ENCODE measurements at regions of chr1 and their contacts with region 1.

Region 1: DNA sequence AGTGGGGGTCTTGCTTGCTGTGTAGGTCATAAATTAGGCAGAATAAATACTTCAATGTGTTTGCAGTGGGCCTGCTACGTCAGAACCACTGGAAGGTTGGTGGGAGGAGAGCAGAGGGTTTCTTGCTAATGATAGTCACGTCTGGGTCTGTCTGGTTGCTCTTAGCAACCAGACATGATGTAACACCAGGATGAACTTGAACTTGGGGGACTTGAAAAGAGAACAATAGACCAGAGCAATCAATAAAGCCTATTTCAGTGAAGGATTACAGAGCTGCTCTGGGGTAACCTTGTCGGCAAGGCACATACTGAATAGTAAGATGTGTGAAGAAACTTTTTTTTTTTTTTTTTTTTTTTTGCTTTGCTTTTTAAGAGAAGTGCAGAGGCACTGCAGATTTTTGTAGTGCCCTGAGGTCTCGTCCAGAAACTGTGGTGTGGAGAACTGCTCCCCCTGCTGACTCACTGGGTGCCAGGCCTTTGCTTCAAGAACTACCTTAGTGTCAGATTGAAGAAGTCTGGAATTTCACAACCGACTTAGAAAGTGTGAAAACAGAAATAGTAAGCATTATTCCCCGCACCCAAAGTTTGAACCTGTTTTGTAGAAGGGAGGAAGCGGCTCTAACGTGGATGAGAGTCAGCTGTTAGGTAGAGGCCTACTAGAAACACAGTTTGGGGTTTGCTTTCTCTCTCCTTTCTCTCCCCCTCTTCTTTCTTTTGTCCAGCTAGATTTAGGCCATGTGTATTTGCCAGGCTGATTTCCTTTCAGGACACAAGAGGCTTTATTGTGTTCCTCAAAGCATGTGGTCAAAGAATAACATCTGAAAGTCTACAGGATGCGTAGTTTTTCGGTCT is 271.6 kb downstream of the TM2D1 start:
- DNase-seq: peak; percentile 15
- ATAC-seq: peak; percentile 93
- H3K4me3 ChIP-seq: no peak overlapping the region
- H3K27ac ChIP-seq: no peak overlapping the region
- H3K4me1 ChIP-seq: no peaks in the 10 kb centered on the region
- H3K27me3 ChIP-seq: no peaks in the 10 kb centered on the region
- CTCF ChIP-seq: peak; percentile 69 to 84 (median 80)
- EP300 ChIP-seq: no peak
- POLR2A ChIP-seq: no peak
- RAD21 ChIP-seq: peak; percentile 74

Region 2: DNA sequence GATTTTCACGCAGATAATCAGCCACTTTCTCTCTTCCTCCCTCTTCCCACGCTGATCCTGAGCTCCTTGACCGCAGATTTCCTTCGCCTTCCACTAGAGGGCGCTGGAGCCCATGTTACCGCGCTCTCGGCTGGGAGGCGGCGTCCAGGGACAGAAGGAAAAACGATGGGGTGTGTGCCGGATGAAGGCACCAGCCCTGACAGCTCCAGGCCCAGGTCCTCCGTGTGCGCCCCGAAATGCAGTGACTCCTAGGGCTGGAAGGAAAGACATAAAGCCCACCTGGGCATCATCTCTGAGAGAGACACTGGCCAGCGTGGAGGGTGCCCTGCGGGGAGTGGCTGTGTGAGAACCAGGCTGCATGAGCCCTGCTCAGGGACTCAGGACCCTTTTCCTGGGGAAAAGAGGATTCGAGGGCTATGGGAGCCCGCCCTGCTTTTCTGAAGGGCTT is 1481.8 kb before region 1 on chr1:
- CTCF ChIA-PET with region 1: interaction called, 3 read pairs
- POLR2A ChIA-PET with region 1: no interaction called
- RAD21 ChIA-PET with region 1: no interaction called
- SMC1A ChIA-PET with region 1: no interaction called
- in situ Hi-C with region 1: no loop called
- intact Hi-C with region 1: loop called (anchors 10 kb)
- DNase-seq: no peak
- ATAC-seq: peak; percentile 86
- H3K4me3 ChIP-seq: no peak overlapping the region
- H3K27ac ChIP-seq: no peak overlapping the region
- H3K4me1 ChIP-seq: no peaks in the 10 kb centered on the region
- H3K27me3 ChIP-seq: no peaks in the 10 kb centered on the region
- CTCF ChIP-seq: peak; percentile 87 to 90 (median 90)
- EP300 ChIP-seq: no peak
- POLR2A ChIP-seq: no peak
- RAD21 ChIP-seq: peak; percentile 68

Region 3: DNA sequence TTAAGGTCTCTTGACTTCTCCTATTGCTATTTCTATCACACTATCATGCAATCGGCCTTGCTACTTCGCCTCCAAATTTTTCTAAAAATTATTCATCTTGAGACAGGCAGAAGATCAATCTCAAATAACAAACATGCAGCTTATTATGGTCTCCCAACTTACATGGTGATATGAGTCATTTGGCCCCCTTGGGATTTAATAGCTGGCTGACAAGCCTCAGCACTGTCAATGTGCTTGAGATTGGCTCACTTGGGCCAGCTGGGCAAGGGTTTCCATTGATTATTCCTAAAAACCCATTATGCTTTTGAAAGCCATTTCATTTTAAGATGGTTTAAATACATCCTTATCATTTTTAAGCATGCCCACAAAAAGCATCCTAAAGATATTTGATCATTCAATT is 595.5 kb before region 1 on chr1:
- CTCF ChIA-PET with region 1: no interaction called
- POLR2A ChIA-PET with region 1: no interaction called
- RAD21 ChIA-PET with region 1: no interaction called
- SMC1A ChIA-PET with region 1: no interaction called
- in situ Hi-C with region 1: loop called (anchors 10 kb)
- intact Hi-C with region 1: no loop called
- DNase-seq: no peak
- ATAC-seq: no peak
- H3K4me3 ChIP-seq: no peak overlapping the region
- H3K27ac ChIP-seq: no peak overlapping the region
- H3K4me1 ChIP-seq: no peaks in the 10 kb centered on the region
- H3K27me3 ChIP-seq: no peaks in the 10 kb centered on the region
- CTCF ChIP-seq: no peak
- EP300 ChIP-seq: no peak
- POLR2A ChIP-seq: no peak
- RAD21 ChIP-seq: no peak

Region 4: GRCh38 chr1:60978421-60979357 is 474.6 kb before region 1 on chr1:
- CTCF ChIA-PET with region 1: interaction called, 8 read pairs
- POLR2A ChIA-PET with region 1: no interaction called
- RAD21 ChIA-PET with region 1: interaction called, 4 read pairs
- SMC1A ChIA-PET with region 1: interaction called, 10 read pairs
- in situ Hi-C with region 1: loop called (anchors 10 kb)
- intact Hi-C with region 1: loop called (anchors 2 kb)
- DNase-seq: peak; percentile 15
- ATAC-seq: peak; percentile 93
- H3K4me3 ChIP-seq: no peak overlapping the region
- H3K27ac ChIP-seq: no peak overlapping the region
- H3K4me1 ChIP-seq: no peaks in the 10 kb centered on the region
- H3K27me3 ChIP-seq: no peaks in the 10 kb centered on the region
- CTCF ChIP-seq: peak; percentile 58 to 60 (median 60)
- EP300 ChIP-seq: no peak
- POLR2A ChIP-seq: no peak
- RAD21 ChIP-seq: peak; percentile 62

Region 5: DNA sequence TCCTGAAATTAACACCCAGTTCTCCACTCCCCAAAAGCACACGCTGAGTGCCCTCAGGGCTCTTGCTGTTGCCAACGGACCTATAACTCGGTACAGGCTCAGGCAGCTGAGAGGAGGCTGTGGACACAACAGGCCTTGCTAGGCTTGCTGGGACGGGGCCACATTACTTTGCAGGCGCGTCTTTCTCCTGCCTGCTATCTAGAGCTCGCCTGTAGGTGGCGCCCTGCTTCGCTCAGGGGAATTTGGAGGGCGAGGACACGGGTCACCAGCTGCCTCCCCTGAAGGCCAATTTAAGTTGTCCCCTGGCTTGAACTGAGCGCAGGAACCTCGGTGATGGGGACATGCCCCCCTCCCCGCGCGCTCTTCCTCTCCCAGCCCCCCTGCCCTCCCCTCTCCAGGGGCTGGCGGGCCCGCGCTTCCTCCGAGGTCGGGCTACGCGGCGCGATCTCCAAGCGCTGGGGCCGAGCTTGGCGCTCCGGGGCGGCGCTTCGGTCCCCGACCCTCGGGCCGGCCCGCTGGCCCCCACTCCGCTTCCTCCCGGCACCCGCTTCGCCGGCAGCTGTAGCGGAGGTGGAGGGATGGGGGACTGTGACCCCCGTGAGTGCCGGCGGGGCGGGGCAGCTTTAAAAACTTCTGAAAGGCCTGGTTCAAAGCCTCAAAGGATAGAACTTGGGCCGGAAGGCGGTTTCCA is 403.3 kb before region 1 on chr1:
- CTCF ChIA-PET with region 1: interaction called, 14 read pairs
- POLR2A ChIA-PET with region 1: no interaction called
- RAD21 ChIA-PET with region 1: no interaction called
- SMC1A ChIA-PET with region 1: no interaction called
- in situ Hi-C with region 1: no loop called
- intact Hi-C with region 1: loop called (anchors 1 kb)
- DNase-seq: no peak
- ATAC-seq: peak; percentile 89
- H3K4me3 ChIP-seq: peak overlapping the region; percentile 32; the same call in 1 of the 2 replicates
- H3K27ac ChIP-seq: no peak overlapping the region
- H3K4me1 ChIP-seq: no peaks in the 10 kb centered on the region
- H3K27me3 ChIP-seq: peaks cover 5 to 22% of the 10 kb centered on the region in 2 experiments
- CTCF ChIP-seq: peak; percentile 75 to 80 (median 79)
- EP300 ChIP-seq: no peak
- POLR2A ChIP-seq: no peak
- RAD21 ChIP-seq: peak; percentile 62

Region 6: GRCh38 chr1:61412601-61413000 is 40.7 kb before region 1 on chr1:
- CTCF ChIA-PET with region 1: no interaction called
- POLR2A ChIA-PET with region 1: no interaction called
- RAD21 ChIA-PET with region 1: no interaction called
- SMC1A ChIA-PET with region 1: no interaction called
- in situ Hi-C with region 1: no loop called
- intact Hi-C with region 1: no loop called
- DNase-seq: no peak
- ATAC-seq: no peak
- H3K4me3 ChIP-seq: no peak overlapping the region
- H3K27ac ChIP-seq: no peak overlapping the region
- H3K4me1 ChIP-seq: no peaks in the 10 kb centered on the region
- H3K27me3 ChIP-seq: no peaks in the 10 kb centered on the region; a peak in 1 of 4 replicates
- CTCF ChIP-seq: no peak
- EP300 ChIP-seq: no peak
- POLR2A ChIP-seq: no peak
- RAD21 ChIP-seq: no peak

Measured in GM12878 (cell line).